Right ventricle myocardium inferior (tissue), 1 donor: ENCODE measurements at regions of chr1 and their contacts with region 1.

Region 1: GRCh38 chr1:58546520-58547308 is at the start of gene OMA1:
- DNase-seq: peak; percentile 99
- ATAC-seq: peak; percentile 99
- total RNA-seq, gene OMA1: 27.8 TPM

Region 2: GRCh38 chr1:58592529-58593134 is 45.9 kb after region 1 on chr1:
- intact Hi-C with region 1: no loop called
- DNase-seq: peak; percentile 76
- ATAC-seq: peak; percentile 89

Region 3: GRCh38 chr1:58652651-58653184 is 106.0 kb after region 1 on chr1:
- intact Hi-C with region 1: loop called (anchors 2 kb)
- DNase-seq: no peak
- ATAC-seq: peak; percentile 83